ENCODE measurements at regions of chr2 and their contacts with region 1.

Region 1: GRCh38 chr2:18749912-18750526 is 160.7 kb upstream of the NT5C1B start:
- DNase-seq: peak in 1 of 2 donors; percentile 21
- ATAC-seq: peak in 3 of 4 donors; percentile 58 to 85 (median 59)
- H3K4me3 ChIP-seq: no peak overlapping the region
- H3K27ac ChIP-seq: no peak overlapping the region
- H3K4me1 ChIP-seq: peaks cover 23% of the 10 kb centered on the region
- H3K27me3 ChIP-seq: no peaks in the 10 kb centered on the region
- CTCF ChIP-seq: peak; percentile 77

Region 2: DNA sequence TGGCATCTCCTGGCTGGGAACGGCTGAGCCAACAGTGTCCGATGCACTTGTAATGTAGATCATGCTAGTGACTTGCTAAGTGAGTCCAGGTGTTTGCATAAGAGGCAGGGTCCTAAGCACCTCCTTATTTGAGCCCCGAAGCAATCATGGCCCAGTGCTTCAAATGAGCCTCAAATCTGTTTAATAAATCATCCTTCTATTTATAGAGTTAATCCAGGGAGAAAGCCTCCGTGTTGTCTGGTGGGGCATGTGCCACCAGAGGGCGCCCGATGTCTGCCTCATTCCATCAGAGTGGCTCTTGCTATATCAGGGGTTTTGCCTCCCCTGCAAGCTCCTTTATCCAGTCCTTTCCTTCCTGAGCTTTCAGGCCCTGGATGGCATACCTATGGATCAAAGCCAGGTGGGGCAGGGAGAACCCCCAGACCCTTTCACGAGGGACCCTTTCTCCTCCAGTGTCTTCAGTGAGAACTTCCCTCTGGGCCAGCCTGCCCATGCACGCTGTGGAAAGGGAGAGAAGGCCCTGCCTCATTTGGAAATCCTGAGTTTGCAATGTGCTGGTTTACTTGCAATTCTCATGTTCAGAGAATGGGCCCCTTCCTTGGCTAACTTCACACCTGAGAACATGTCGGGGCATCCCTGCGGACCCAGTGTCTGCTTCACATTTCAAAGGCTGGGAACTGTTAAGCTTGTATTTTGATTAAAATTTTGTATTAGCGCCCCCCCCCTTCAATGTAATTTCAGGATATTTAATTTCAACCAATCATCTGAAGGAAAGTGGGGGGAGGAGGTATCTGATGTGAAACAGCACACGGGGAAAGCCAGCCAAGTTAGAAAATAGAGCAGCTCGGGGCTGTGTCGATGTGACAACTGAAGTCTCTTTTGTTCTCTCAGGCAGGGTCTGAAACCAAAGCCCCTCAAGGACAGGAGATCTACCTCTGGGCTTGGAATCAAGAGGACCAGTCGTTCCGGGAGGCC is 229.3 kb before region 1 on chr2:
- intact Hi-C with region 1: loop called in 1 of 2 experiments (anchors 2 kb)
- DNase-seq: peak; percentile 89 to 93
- ATAC-seq: peak; percentile 90 to 98 (median 96)
- H3K4me3 ChIP-seq: no peak overlapping the region
- H3K27ac ChIP-seq: peak overlapping the region; percentile 42
- H3K4me1 ChIP-seq: peaks cover 23% of the 10 kb centered on the region
- H3K27me3 ChIP-seq: no peaks in the 10 kb centered on the region
- CTCF ChIP-seq: peak; percentile 93

Region 3: DNA sequence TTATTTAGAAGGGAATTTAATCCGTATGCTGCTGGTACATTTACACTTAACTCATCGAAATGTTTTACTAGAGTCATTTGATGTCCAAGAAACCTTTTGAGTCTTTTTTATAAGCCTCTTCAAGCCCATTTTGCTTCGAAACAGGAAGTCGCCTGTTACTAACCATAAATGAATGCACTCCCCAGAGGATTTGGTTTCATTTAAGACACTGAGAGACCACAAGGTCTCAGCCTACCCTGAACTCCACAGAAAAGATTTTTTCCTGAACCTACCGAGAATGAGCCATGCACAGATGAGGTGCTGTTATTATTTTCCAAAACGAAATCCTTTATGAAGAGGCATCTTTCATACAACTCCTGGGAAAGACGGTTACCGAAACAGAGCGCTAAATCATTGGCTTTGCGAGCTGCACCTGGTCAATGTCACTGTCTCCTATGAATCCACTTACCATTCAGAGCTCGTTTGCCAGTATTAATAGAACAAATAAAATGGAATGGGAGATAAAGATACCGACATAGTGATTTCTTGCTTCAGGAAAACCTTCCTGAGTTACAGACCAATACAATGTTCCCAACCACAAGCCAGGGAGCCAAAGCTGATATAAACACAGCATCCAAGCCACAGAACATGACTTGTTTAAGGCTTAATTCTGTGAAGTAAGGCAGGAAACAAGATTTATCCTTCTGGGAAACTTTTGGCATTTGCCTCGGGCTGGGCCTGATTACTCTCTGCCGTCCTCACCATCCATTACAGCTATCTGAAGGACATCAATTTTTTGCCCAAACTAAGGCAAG is 226.3 kb after region 1 on chr2:
- intact Hi-C with region 1: loop called in 1 of 2 experiments (anchors 10 kb)
- DNase-seq: no peak
- ATAC-seq: no peak
- H3K4me3 ChIP-seq: no peak overlapping the region
- H3K27ac ChIP-seq: no peak overlapping the region
- H3K4me1 ChIP-seq: no peaks in the 10 kb centered on the region
- H3K27me3 ChIP-seq: no peaks in the 10 kb centered on the region
- CTCF ChIP-seq: no peak

Region 4: DNA sequence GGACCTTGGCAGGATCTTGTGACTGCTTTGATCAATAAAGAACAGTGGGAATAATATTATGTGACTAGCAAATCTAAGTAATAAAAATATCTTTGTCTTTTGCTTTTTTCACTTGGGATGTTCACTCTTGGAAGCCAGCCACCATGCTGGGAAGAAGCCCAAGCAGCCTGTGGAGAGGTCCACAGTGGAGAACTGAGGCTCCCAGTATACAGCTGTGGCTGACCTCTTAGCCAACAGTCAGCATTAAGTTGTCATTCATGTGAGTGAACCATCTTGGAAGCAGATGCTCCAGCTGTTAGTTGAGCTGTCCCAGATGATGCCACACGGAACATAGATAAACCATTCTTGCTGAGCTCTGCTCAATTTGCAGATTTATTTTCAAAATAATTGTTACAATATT is 448.4 kb after region 1 on chr2:
- intact Hi-C with region 1: no loop called
- DNase-seq: no peak
- ATAC-seq: no peak
- H3K4me3 ChIP-seq: no peak overlapping the region
- H3K27ac ChIP-seq: no peak overlapping the region
- H3K4me1 ChIP-seq: no peaks in the 10 kb centered on the region
- H3K27me3 ChIP-seq: no peaks in the 10 kb centered on the region
- CTCF ChIP-seq: no peak